A549 (cell line): ENCODE measurements at regions of chr12 and their contacts with region 1.

Region 1: DNA sequence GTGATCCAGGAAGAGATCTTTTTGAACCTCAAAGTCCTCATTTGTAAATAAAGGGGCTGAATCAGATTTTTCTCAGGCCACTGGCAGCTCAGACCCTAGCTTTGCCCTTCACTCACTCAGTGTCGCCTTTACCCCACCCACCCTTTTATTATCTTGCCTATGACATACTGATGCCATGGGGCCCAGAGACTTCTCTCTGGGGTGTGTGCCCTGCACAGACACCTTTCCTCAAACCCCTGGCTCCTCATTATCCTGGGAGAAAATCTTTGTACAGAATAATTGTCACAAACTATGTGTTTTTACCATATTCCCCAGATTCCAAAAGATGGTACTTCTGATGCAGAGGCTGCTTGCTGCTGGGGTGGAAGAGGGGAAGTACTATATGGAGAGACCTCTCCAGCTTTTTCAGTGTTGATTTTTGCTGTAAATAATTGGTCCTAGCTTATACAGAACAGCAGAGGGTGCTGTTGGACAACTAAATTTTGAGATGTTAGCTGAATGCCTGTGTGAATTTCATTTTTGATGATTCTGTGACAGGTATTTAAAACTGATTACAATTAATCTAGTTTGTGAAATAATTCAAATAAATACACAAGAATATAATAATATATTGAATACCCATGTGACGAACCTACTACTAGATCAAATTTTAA is 53.9 kb upstream of the DCD start:
- DNase-seq: peak; percentile 34 to 55
- ATAC-seq: peak; percentile 57 to 88; a peak in 4 of 6 replicates
- H3K4me3 ChIP-seq: no peak overlapping the region
- H3K27ac ChIP-seq: no peak overlapping the region
- H3K4me1 ChIP-seq: no peaks in the 10 kb centered on the region
- CTCF ChIP-seq: peak; percentile 70
- EP300 ChIP-seq: no peak
- POLR2A ChIP-seq: no peak
- RAD21 ChIP-seq: peak; percentile 67 to 73

Region 2: DNA sequence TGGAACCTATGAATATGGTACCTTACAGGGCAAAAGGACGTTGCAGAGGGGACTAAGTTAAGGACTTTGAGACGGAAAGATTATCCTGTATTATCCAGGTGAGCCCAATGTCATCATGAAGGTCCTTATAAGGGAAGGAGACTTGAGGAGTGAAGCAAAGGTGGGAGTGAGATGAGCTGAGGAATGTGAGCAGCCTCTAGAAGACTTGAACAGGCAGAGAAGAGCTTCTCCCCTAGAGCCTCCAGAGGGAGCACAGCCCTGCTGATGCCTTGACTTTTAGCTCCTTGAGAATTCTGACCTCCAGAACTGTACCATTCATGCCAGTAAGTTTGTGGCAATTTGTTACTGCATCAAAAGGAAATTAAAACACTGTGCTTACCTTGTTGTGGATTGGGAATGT is 12.1 kb before region 1 on chr12:
- CTCF ChIA-PET with region 1: interaction called, 21 read pairs
- POLR2A ChIA-PET with region 1: no interaction called
- DNase-seq: peak in 1 of 2 experiments; percentile 22
- ATAC-seq: peak; percentile 79 to 87
- H3K4me3 ChIP-seq: no peak overlapping the region
- H3K27ac ChIP-seq: no peak overlapping the region
- H3K4me1 ChIP-seq: no peaks in the 10 kb centered on the region
- CTCF ChIP-seq: no peak
- EP300 ChIP-seq: no peak
- POLR2A ChIP-seq: no peak
- RAD21 ChIP-seq: no peak

Region 3: GRCh38 chr12:54725233-54725843 is 23.3 kb after region 1 on chr12:
- CTCF ChIA-PET with region 1: no interaction called
- POLR2A ChIA-PET with region 1: no interaction called
- DNase-seq: peak; percentile 38 to 41
- ATAC-seq: peak; percentile 86 to 90
- H3K4me3 ChIP-seq: no peak overlapping the region
- H3K27ac ChIP-seq: no peak overlapping the region
- H3K4me1 ChIP-seq: no peaks in the 10 kb centered on the region
- CTCF ChIP-seq: peak; percentile 36
- EP300 ChIP-seq: no peak
- POLR2A ChIP-seq: no peak
- RAD21 ChIP-seq: peak; percentile 21 to 29; a peak in 1 of 5 replicates

Region 4: DNA sequence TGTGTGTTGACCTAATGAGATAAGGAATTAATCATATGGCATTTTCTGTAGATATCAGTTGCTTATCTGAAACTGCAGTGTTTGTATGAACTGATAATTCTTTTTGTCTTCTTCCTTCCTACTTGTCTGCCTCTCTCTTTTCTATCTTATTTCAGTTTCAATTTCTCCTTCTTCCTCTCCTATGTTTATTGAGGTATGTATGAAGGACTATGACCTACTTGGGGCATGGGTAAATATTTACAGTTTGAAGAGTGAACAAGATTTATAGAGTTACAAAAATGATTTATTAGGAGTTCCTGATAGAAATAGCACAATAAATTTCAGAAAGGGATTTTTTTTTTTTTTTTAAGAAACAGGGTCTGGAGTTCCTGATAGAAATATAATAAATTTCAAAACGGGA is 63.6 kb after region 1 on chr12:
- CTCF ChIA-PET with region 1: no interaction called
- POLR2A ChIA-PET with region 1: no interaction called
- DNase-seq: no peak
- ATAC-seq: no peak
- H3K4me3 ChIP-seq: no peak overlapping the region
- H3K27ac ChIP-seq: no peak overlapping the region
- H3K4me1 ChIP-seq: no peaks in the 10 kb centered on the region
- CTCF ChIP-seq: no peak
- EP300 ChIP-seq: no peak
- POLR2A ChIP-seq: no peak
- RAD21 ChIP-seq: no peak